Activated T-helper 1 cell treated with anti-CD3 and anti-CD28 coated beads, Interleukin-12 subunit alpha, Interleukin-12 subunit beta, Interleukin-2, Interleukin-4 antibody, amounts not matched to agents 30 ng/mL and 10 ng/mL and 1 ng/mL, durations not matched to agents 14 hours and 24 hours and 36 hours (primary cell): ENCODE measurements at regions of chr17 and their contacts with region 1.

Region 1: GRCh38 chr17:7403977-7404736 is at the start of gene TMEM256:
- DNase-seq: peak; percentile 94
- H3K4me3 Mint-ChIP-seq: peak within 1 kb of the TSS; percentile 92
- H3K27ac Mint-ChIP-seq: peak within 1 kb of the TSS; percentile 95
- H3K4me1 Mint-ChIP-seq: peaks cover 13% of the 10 kb centered on the region
- H3K27me3 Mint-ChIP-seq: peaks cover 21% of the 10 kb centered on the region
- total RNA-seq, gene TMEM256: 53.5 and 54.7 TPM in 2 replicates

Region 2: DNA sequence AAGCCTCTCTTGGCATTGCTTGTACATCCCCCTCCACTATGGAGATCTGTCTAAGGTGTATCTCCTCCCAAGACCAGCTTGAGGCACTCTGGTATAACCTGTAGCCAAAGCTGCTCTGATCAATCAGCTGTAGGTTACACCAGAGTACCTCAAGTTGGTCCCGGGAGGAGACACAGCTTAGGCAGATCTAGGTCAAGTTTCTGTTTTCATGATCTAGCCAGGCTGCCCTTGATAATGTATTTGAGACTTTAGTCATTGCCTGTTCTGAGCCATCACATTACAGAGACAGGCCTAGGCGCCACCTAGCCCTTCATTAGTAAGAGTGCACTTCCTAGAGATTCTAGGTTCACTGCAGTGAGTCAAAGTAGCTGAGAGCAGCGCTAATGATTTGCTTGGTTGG is 256.4 kb before region 1 on chr17:
- intact Hi-C with region 1: no loop called
- DNase-seq: no peak
- H3K4me3 Mint-ChIP-seq: no peak overlapping the region
- H3K27ac Mint-ChIP-seq: no peak overlapping the region
- H3K4me1 Mint-ChIP-seq: no peaks in the 10 kb centered on the region
- H3K27me3 Mint-ChIP-seq: peaks cover 12% of the 10 kb centered on the region

Region 3: DNA sequence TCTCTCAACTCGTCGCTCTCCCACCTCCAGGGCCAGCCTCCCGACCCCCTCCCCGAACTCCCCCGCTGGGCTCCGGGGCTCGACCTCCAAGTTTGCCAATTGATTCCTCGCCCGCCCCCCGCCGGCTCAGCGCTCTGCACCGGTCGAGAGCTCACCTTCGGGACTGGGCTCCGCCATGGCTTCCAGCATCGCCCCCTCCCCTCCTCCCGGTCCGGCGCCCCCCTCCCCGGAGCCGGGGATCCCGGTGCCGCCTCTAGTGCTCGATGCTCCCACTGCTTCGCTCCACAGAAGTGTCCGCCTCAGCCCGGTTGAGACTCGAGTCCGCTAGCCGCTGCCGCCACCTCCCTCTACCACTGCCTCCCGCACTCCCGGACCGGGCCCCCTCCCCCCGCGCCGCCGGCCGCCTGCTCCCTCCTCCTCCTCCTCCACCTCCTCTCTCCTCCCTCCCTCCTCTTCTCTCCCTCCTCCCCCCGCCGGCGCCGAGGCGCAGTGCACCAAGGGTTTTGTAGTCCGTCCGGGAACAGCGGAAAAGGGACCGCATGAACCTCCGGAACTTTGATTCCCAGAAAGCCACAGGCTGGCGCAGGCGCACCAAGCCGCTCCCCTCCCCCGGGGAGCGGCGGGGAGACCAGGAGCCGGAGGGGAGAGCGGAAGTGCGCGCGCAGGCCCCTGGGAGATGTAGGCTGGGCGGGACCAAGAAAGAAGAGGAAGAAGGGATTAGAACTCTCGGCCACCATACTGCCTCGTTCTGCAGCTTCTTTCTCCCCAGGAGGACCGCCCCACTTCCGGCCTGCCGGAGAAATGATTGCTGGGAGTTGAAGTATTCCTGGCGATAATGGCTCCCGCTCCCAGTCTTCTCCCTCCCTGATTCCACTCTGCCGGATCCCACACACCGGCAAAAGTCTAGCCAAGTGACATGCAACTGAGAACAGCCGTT is 164.8 kb before region 1 on chr17 and contains the start of gene PHF23:
- intact Hi-C with region 1: loop called (anchors 1 kb)
- DNase-seq: peak; percentile 98
- H3K4me3 Mint-ChIP-seq: peak within 1 kb of the TSS; percentile 97
- H3K27ac Mint-ChIP-seq: peak within 1 kb of the TSS; percentile 94
- H3K4me1 Mint-ChIP-seq: peaks cover 68% of the 10 kb centered on the region
- H3K27me3 Mint-ChIP-seq: no peaks in the 10 kb centered on the region
- total RNA-seq, gene PHF23: 52.5 and 55.4 TPM in 2 replicates

Region 4: GRCh38 chr17:7306911-7307686 is 97.1 kb before region 1 on chr17 and contains the start of gene EIF5A:
- intact Hi-C with region 1: loop called (anchors 1 kb)
- DNase-seq: peak; percentile 99
- H3K4me3 Mint-ChIP-seq: peak within 1 kb of the TSS; percentile 94
- H3K27ac Mint-ChIP-seq: peak within 1 kb of the TSS; percentile 100
- H3K4me1 Mint-ChIP-seq: peaks cover 24% of the 10 kb centered on the region
- H3K27me3 Mint-ChIP-seq: peaks cover 4% of the 10 kb centered on the region
- total RNA-seq, gene EIF5A: 1,241 and 1,262 TPM in 2 replicates

Region 5: GRCh38 chr17:7383742-7384488 is 20.2 kb before region 1 on chr17:
- intact Hi-C with region 1: loop called (anchors 1 kb)
- DNase-seq: peak; percentile 75
- H3K4me3 Mint-ChIP-seq: peak overlapping the region; percentile 77
- H3K27ac Mint-ChIP-seq: no peak overlapping the region
- H3K4me1 Mint-ChIP-seq: peaks cover 5% of the 10 kb centered on the region
- H3K27me3 Mint-ChIP-seq: peaks cover 35% of the 10 kb centered on the region

Region 6: DNA sequence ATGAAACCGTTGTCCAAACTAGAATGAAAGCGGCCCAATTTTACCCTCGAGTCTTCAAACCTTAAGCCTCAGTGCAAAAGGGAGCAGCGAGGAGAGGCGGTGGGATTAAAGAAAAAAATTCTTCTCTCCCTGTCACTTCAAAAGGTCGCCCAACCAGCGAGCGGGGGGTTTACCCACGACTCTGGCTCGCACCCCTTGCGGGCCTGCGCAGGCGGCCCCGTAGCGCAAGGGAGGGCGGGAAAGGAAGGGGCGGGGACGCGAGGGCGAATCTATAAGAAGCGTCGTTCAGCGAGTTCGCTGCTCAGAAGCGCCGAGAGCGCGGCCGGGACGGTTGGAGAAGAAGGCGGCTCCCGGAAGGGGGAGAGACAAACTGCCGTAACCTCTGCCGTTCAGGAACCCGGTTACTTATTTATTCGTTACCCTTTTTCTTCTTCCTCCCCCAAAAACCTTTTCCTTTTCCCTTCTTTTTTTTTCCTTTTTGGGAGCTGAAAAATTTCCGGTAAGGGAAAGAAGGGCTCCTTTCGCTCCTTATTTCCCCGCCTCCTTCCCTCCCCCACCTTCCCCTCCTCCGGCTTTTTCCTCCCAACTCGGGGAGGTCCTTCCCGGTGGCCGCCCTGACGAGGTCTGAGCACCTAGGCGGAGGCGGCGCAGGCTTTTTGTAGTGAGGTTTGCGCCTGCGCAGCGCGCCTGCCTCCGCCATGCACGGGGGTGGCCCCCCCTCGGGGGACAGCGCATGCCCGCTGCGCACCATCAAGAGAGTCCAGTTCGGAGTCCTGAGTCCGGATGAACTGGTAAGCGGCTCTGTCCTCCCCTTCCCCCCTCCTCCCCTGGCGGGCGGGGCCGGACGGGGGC is 80.1 kb after region 1 on chr17 and contains the start of gene POLR2A:
- intact Hi-C with region 1: loop called (anchors 1 kb)
- DNase-seq: peak; percentile 96
- H3K4me3 Mint-ChIP-seq: peak within 1 kb of the TSS; percentile 96
- H3K27ac Mint-ChIP-seq: peak within 1 kb of the TSS; percentile 98
- H3K4me1 Mint-ChIP-seq: peaks cover 56% of the 10 kb centered on the region
- H3K27me3 Mint-ChIP-seq: no peaks in the 10 kb centered on the region
- total RNA-seq, gene POLR2A: 221 and 223 TPM in 2 replicates

Region 7: DNA sequence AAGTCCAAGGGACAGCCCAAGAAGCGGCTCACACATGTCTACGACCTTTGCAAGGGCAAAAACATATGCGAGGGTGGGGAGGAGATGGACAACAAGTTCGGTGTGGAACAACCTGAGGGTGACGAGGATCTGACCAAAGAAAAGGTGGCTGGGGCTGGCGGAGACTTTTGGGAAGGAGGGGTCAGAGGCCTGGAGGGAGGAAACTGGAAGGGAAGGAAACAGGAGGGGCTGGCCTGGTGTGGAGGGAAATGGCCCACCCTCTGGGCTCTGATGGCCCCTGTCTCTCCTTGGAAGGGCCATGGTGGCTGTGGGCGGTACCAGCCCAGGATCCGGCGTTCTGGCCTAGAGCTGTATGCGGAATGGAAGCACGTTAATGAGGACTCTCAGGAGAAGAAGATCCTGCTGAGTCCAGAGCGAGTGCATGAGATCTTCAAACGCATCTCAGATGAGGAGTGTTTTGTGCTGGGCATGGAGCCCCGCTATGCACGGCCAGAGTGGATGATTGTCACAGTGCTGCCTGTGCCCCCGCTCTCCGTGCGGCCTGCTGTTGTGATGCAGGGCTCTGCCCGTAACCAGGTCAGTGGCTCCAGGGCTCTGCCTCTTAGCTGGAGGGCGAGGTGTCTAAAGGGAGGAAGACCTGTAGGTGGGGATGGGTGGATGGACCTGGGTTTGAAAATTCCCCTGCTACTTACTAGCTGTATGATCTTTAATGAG is 92.5 kb after region 1 on chr17:
- intact Hi-C with region 1: no loop called
- DNase-seq: no peak
- H3K4me3 Mint-ChIP-seq: no peak overlapping the region
- H3K27ac Mint-ChIP-seq: no peak overlapping the region
- H3K4me1 Mint-ChIP-seq: peaks cover 19% of the 10 kb centered on the region
- H3K27me3 Mint-ChIP-seq: no peaks in the 10 kb centered on the region

Region 8: DNA sequence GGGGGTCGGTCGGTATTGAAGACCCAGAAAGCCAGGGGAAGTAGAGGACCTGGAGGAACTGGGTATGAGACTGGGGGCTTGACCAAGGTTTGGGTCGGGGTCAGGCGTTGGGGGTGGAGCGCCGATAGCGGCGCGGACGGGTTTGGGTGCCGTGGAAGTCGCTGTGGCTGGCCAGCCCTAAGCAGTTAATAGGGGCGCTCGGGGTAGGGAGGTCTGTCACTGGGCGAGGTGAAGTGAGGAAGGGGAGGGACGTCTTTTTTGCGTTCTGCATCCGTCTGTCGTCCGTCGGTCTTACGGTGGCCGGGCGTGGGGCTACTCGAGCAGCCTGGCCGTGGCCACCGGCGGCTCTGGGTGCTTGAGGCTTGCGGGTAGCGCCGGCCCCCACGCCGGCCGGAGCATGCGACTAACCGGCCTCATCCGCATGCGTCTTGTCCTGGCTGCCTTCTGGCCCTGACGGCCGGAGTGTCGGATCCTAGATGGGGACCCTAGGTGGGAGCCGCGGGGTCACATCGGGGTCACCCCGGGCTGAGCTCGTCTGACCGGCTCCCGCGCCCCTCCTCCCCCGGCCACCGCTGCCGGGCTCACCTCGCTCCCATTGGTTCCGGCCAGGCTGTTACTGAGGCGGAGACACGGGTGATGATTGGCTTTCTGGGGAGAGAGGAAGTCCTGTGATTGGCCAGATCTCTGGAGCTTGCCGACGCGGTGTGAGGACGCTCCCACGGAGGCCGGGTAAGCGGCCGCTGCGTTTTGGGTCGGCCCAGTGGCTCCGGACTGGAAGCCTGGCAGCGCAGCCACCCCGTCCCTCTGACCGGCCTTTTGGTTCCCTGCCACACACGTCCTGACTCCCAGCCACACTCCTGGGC is 440.4 kb after region 1 on chr17:
- intact Hi-C with region 1: loop called (anchors 5 kb)
- DNase-seq: peak; percentile 87
- H3K4me3 Mint-ChIP-seq: peak overlapping the region; percentile 89
- H3K27ac Mint-ChIP-seq: peak overlapping the region; percentile 96
- H3K4me1 Mint-ChIP-seq: peaks cover 37% of the 10 kb centered on the region
- H3K27me3 Mint-ChIP-seq: no peaks in the 10 kb centered on the region